ENCODE measurements at regions of chr2 and their contacts with region 1.

Region 1: DNA sequence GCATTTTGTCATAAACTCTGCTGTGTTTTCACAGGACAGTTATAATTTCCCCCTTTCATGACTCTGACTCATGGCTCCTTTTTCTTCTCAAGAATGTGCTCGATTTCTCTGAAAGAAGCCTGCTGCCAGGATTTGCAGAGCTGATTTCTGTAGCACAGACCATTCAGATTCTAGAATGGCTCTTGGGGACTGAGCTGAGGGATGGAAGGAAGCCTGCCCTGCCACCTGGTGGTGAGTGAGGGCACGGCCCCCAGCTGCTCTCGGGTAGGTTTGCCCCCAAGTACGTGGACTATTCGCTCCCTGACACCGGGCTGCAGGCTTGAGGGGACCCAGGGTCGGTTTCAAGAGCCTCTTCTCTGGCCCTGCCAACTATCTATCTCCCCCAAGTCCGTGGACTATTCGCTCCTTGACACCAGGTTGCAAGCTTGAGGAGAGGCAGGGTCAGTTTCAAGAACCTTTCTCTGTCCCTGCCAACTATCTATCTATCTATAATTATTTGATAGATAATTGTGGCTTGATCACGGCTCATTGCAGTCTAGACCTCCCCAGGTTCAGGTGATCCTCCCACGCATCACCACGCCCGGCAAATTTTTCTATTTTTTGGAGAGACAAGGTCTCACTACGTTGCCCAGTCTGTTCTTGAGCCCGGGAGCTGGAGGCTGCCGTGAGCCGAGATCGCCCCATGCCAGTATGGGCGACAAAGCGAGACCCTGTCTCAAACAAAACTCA is 1.4 kb upstream of the SMYD5 start:
- DNase-seq: peak; percentile 89
- ATAC-seq: peak; percentile 78
- H3K4me3 Mint-ChIP-seq: peak overlapping the region; percentile 33
- H3K27ac Mint-ChIP-seq: no peak overlapping the region
- H3K4me1 Mint-ChIP-seq: peaks cover 29% of the 10 kb centered on the region
- H3K27me3 Mint-ChIP-seq: no peaks in the 10 kb centered on the region
- CTCF ChIP-seq: peak; percentile 90

Region 2: DNA sequence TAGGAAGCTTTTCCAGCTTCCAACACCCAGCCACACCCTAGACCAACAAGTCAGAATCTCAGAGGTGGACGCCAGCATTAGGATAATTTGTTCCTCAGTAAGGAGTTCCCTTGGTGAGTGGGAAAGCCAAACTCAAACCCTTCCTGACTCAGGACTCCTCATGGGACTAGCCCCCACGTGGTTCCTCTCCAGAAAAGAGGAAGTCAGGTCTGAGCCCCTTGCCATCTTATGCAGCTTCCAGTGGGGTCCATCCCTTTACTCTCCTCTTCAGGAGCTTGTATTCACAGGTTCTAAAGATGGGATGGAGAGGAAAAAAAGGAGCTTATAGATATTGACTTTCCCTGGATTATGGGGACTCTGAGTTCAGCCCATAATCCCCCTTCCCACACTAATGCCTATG is 25.1 kb before region 1 on chr2:
- CTCF ChIA-PET with region 1: interaction called, 15 read pairs
- POLR2A ChIA-PET with region 1: no interaction called
- intact Hi-C with region 1: no loop called
- DNase-seq: no peak
- ATAC-seq: no peak
- H3K4me3 Mint-ChIP-seq: no peak overlapping the region
- H3K27ac Mint-ChIP-seq: no peak overlapping the region
- H3K4me1 Mint-ChIP-seq: no peaks in the 10 kb centered on the region
- H3K27me3 Mint-ChIP-seq: peaks cover 7% of the 10 kb centered on the region
- CTCF ChIP-seq: no peak

Region 3: GRCh38 chr2:73197579-73197978 is 15.0 kb before region 1 on chr2:
- CTCF ChIA-PET with region 1: interaction called, 14 read pairs
- POLR2A ChIA-PET with region 1: interaction called, 6 read pairs
- intact Hi-C with region 1: no loop called
- DNase-seq: no peak
- ATAC-seq: no peak
- H3K4me3 Mint-ChIP-seq: no peak overlapping the region
- H3K27ac Mint-ChIP-seq: no peak overlapping the region
- H3K4me1 Mint-ChIP-seq: peaks cover 3% of the 10 kb centered on the region
- H3K27me3 Mint-ChIP-seq: peaks cover 30% of the 10 kb centered on the region
- CTCF ChIP-seq: no peak

Region 4: DNA sequence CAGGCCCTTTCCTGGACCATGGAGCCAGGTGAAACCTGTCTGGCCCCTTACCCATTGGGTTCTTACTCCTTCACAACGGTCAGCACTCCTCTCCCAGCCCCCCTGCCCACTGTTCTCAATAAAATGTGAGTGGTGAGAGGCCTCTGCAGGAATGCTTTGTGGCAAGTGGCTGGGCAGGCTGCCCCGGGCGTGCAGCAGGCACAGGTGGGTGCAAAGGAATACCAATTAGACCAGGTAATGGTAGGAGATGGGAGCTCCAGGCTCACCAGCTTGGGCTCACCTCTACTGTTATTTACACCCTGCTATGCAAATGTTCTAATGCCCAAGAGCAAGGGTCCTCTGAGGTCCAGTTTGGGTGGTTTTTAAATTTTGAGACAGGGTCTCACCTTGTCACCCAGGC is 14.5 kb after region 1 on chr2:
- CTCF ChIA-PET with region 1: interaction called, 53 read pairs
- POLR2A ChIA-PET with region 1: interaction called, 108 read pairs
- intact Hi-C with region 1: no loop called
- DNase-seq: no peak
- ATAC-seq: no peak
- H3K4me3 Mint-ChIP-seq: no peak overlapping the region
- H3K27ac Mint-ChIP-seq: no peak overlapping the region
- H3K4me1 Mint-ChIP-seq: peaks cover 7% of the 10 kb centered on the region
- H3K27me3 Mint-ChIP-seq: no peaks in the 10 kb centered on the region
- CTCF ChIP-seq: no peak

Region 5: DNA sequence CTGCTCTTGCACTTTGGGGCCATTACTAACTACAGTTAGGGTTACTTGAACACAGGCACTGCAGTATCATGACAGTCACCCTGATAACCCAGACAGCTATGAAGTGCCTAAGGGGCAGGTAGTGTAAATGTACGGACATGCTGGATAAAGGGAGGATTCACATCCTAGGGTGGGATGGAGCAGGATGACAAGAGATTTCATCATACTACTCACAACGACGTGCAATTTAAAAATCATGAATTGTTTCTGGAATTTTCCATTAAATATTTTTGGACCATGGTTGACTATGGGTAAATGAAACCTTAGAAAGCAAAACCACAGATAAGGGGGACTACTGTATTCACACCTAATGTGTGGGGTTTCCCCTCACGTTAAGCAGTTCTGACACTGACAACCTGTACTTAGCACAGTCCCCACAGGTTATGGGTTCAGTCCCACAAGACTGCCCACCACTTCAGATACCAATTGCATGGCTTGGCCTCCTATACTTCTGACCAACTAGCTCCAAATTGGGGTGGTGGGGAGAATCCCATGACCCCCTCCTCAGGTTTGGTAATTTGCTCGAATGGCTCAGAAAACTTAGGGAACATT is 353.8 kb after region 1 on chr2:
- CTCF ChIA-PET with region 1: no interaction called
- POLR2A ChIA-PET with region 1: no interaction called
- intact Hi-C with region 1: no loop called
- DNase-seq: no peak
- ATAC-seq: no peak
- H3K4me3 Mint-ChIP-seq: no peak overlapping the region
- H3K27ac Mint-ChIP-seq: no peak overlapping the region
- H3K4me1 Mint-ChIP-seq: no peaks in the 10 kb centered on the region
- H3K27me3 Mint-ChIP-seq: no peaks in the 10 kb centered on the region
- CTCF ChIP-seq: no peak

Measured in activated CD8-positive, alpha-beta T cell treated with anti-CD3 and anti-CD28 coated beads for 36 hours (primary cell).